Dendritic cell treated with granulocyte-macrophage colony-stimulating factor and Interleukin-4, amounts not matched to agents 40 ng/mL and 50 ng/mL, for 4 days (primary cell): ENCODE measurements at regions of chr20 and their contacts with region 1.

Region 1: DNA sequence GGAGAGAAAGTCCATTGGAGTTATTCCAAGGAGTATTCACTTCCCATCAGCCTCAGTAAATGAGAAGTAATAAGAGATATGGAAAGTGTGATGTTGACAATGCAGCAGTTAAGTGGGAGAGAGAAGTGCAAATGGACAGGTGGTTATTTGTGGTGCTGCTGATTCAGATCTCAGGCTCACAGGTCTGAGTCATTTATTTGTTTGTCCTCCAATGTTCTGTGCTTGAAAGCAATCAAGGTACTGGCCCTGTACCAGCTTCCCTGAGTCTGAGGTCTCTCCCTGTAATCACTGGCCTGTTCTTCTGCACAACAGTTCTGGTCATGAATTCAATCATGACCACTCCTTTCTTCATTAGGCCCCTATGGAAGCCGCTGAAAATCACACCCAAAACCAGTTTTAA is 827.7 kb downstream of the MAFB start:
- H3K4me3 Mint-ChIP-seq: no peak overlapping the region
- H3K27ac Mint-ChIP-seq: no peak overlapping the region
- H3K4me1 Mint-ChIP-seq: no peaks in the 10 kb centered on the region
- H3K27me3 Mint-ChIP-seq: peaks cover 2% of the 10 kb centered on the region

Region 2: DNA sequence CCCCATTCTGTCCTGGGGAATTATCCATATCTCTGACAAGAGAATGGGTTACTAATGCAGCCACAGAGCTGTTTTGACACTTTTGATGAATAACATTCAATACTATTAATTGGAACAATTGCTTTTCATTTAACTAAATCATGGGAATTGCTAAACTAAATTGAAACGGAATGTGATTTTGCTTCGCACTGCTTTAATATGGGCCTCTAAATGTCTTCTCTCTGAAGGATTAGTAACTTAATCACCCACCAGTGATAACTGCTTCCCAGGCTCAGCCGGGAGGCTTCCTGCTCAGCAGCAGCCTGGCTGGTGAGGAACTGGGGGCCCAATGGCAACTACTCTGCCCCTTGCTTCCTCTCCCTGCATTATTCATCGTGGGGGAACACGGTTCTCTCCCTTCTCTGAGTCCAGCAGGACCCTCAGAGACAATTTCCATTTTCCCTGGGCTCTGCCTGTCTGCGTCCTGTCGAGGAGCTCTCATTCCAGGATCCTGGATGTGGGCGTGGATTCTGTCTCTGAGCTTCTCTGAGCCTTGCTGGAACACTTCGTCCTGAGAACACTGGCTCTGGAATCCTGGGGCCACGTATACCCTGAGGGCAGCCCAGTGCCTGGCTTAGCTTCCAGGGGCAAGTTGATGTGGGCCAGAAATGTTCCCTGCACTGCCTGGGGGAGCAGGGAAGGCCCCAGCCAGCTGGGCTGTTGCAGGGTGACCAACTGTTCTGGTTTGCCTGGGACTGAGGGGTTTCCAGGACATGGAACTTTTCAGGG is 590.4 kb before region 1 on chr20:
- intact Hi-C with region 1: loop called (anchors 10 kb)
- H3K4me3 Mint-ChIP-seq: no peak overlapping the region
- H3K27ac Mint-ChIP-seq: no peak overlapping the region
- H3K4me1 Mint-ChIP-seq: no peaks in the 10 kb centered on the region
- H3K27me3 Mint-ChIP-seq: peaks cover 6% of the 10 kb centered on the region

Region 3: GRCh38 chr20:39954621-39955020 is 93.2 kb after region 1 on chr20:
- intact Hi-C with region 1: no loop called
- H3K4me3 Mint-ChIP-seq: no peak overlapping the region
- H3K27ac Mint-ChIP-seq: no peak overlapping the region
- H3K4me1 Mint-ChIP-seq: no peaks in the 10 kb centered on the region
- H3K27me3 Mint-ChIP-seq: peaks cover 2% of the 10 kb centered on the region